Endothelial cell of umbilical vein (primary cell): ENCODE measurements at regions of chr1 and their contacts with region 1.

Region 1: DNA sequence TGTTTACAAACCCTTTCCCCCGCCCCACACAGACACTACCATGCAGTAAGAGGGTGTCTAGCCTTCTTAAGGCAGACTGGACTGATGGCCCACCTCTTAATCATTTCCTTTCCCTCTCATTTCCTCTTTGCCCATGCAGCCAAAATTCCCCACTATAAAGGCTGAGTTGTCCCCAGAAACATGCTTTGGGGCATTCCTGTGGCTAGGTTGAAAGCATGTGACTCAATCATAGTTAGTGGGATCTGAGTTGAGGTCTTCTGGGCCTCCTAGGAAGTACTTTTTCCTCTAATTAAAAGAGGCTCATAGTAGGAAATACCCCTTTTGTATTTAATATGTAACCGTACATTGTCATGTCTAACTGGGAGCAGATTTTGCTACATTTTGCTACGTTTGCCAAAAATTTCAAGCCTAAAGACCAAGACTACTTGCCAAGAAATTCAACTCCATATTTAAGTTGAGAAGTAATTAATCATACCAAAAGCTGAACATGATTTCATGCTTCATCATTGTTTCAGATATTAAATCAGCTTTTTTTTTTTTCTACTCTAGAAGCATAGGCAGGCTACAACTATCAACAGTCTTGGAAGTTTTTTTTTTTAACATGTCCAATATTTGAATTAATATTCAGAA is 174.7 kb downstream of the ADGRL4 start:
- DNase-seq: peak; percentile 78
- H3K4me3 ChIP-seq: no peak overlapping the region
- H3K27ac ChIP-seq: peak overlapping the region; percentile 94
- H3K4me1 ChIP-seq: peaks cover 33% of the 10 kb centered on the region
- H3K27me3 ChIP-seq: no peaks in the 10 kb centered on the region
- CTCF ChIP-seq: no peak
- POLR2A ChIP-seq: no peak

Region 2: GRCh38 chr1:78688701-78689100 is 143.1 kb before region 1 on chr1:
- CTCF ChIA-PET with region 1: interaction called, 9 read pairs
- POLR2A ChIA-PET with region 1: no interaction called
- dilution Hi-C with region 1: no loop called
- intact Hi-C with region 1: loop called (anchors 2 kb)
- DNase-seq: peak; percentile 56
- H3K4me3 ChIP-seq: no peak overlapping the region
- H3K27ac ChIP-seq: no peak overlapping the region
- H3K4me1 ChIP-seq: peaks cover 2% of the 10 kb centered on the region
- H3K27me3 ChIP-seq: no peaks in the 10 kb centered on the region
- CTCF ChIP-seq: no peak
- POLR2A ChIP-seq: no peak

Region 3: DNA sequence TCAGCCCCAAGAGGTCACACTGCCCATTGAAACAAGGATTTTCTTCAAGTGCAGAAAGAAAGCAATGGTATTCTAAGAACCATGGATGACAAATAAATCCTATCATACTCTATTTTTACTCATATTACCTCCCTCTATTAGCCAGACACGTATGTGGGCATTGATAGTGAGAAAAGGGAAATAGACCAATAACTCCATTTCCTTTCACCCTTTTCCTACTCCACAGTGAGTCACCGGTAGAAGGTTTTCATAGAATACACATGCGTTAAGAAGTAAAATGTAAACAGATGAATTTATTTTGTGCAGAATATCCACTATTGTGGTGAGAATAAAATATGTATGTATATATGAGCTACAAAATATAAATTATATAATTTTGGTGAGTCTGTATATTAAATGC is 743.6 kb after region 1 on chr1:
- CTCF ChIA-PET with region 1: no interaction called
- POLR2A ChIA-PET with region 1: no interaction called
- dilution Hi-C with region 1: no loop called
- intact Hi-C with region 1: loop called (anchors 5 kb)
- DNase-seq: peak; percentile 96
- H3K4me3 ChIP-seq: no peak overlapping the region
- H3K27ac ChIP-seq: peak overlapping the region; percentile 89
- H3K4me1 ChIP-seq: peaks cover 23% of the 10 kb centered on the region
- H3K27me3 ChIP-seq: no peaks in the 10 kb centered on the region
- CTCF ChIP-seq: no peak
- POLR2A ChIP-seq: peak; percentile 32